Psoas muscle (tissue), 8 donors: ENCODE measurements at regions of chr17 and their contacts with region 1.

Region 1: GRCh38 chr17:38868817-38869525 is 887 bp upstream of the LASP1 start:
- DNase-seq: peak; percentile 85 to 93
- ATAC-seq: peak; percentile 81 to 86 (median 82)
- H3K4me3 ChIP-seq: peak overlapping the region; percentile 93
- H3K27ac ChIP-seq: peak overlapping the region; percentile 85
- H3K4me1 ChIP-seq: peaks cover 25% of the 10 kb centered on the region
- H3K27me3 ChIP-seq: no peaks in the 10 kb centered on the region
- CTCF ChIP-seq: peak; percentile 10

Region 2: GRCh38 chr17:38898291-38898679 is 29.3 kb after region 1 on chr17:
- intact Hi-C with region 1: no loop called
- DNase-seq: no peak
- ATAC-seq: no peak
- H3K4me3 ChIP-seq: peak overlapping the region; percentile 24
- H3K27ac ChIP-seq: peak overlapping the region; percentile 59
- H3K4me1 ChIP-seq: peaks cover 56% of the 10 kb centered on the region
- H3K27me3 ChIP-seq: no peaks in the 10 kb centered on the region
- CTCF ChIP-seq: no peak

Region 3: GRCh38 chr17:38908676-38909181 is 39.8 kb after region 1 on chr17:
- intact Hi-C with region 1: loop called in 1 of 2 experiments (anchors 5 kb)
- DNase-seq: peak; percentile 19 to 44
- ATAC-seq: peak in 1 of 4 donors; percentile 32
- H3K4me3 ChIP-seq: no peak overlapping the region
- H3K27ac ChIP-seq: peak overlapping the region; percentile 36
- H3K4me1 ChIP-seq: peaks cover 20% of the 10 kb centered on the region
- H3K27me3 ChIP-seq: no peaks in the 10 kb centered on the region
- CTCF ChIP-seq: no peak

Region 4: DNA sequence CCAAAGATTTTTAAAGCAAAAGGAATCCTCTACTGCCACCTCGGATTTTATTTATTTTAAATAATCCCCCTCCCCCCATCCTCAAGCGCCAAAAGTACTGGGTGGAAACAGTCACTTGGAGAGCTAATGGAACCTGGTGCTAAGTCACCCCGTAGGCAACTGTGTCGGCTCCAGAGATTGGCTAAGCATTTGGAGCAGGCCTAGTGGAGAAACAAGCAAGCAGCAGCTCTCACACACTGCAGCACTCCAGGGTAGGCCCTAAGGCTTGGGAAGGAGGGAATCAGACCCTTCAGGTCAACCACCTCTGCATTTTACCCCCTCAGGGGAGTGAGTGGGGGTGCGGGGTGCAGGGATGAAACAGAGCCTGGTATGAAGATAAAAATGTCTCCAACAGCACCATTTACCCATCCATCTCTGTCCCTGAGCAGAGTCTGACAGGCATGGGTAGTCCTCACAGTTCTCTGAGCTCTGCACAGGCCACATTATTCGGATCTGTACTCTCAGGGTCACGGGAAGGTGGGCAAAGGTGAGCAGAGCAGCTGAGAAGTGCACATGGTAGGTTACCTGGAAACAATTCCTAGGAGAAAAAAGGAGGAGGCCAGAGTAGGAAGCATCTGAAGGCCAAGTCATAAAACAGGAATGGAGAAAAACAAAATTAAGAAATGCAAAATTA is 384.0 kb after region 1 on chr17:
- intact Hi-C with region 1: no loop called
- DNase-seq: no peak
- ATAC-seq: no peak
- H3K4me3 ChIP-seq: no peak overlapping the region
- H3K27ac ChIP-seq: no peak overlapping the region
- H3K4me1 ChIP-seq: no peaks in the 10 kb centered on the region
- H3K27me3 ChIP-seq: no peaks in the 10 kb centered on the region
- CTCF ChIP-seq: no peak